ENCODE measurements at regions of chr20 and their contacts with region 1.

Region 1: DNA sequence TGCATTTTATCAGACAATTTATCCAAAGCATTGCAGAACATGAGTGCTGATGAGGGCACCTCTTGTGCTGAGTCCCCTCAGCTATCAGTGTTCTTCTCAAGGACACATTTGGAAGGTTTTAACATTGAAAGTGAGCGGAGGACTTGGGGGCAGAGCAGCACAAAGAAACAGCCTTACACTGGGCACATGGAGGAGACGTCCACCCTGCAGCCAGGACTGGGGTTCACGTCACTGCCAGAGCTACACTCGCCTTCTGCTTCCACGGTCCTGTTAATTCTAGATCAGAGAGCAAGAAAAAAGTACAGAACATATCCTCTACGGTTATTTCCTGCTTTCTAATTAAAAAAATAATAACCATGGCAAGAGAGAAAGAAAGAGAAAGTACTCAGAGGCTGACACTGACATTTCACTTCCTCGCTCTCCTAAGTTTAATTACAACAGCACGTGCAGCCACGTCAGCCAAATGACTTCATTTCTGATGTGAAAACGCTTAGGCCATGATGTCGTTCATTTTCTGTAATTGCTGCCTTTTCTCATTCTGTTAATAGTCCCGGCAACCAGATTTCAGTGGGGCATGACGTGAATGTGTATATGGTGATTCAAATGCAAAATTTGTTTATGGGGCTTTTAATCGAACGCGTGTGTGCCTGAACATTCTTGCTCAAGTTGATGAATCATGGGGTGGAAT is 5.1 kb downstream of the PRND start:
- DNase-seq: peak; percentile 89
- H3K4me3 Mint-ChIP-seq: peak overlapping the region; percentile 40
- H3K27ac Mint-ChIP-seq: peak overlapping the region; percentile 46
- H3K4me1 Mint-ChIP-seq: peaks cover 13% of the 10 kb centered on the region
- H3K27me3 Mint-ChIP-seq: no peaks in the 10 kb centered on the region

Region 2: DNA sequence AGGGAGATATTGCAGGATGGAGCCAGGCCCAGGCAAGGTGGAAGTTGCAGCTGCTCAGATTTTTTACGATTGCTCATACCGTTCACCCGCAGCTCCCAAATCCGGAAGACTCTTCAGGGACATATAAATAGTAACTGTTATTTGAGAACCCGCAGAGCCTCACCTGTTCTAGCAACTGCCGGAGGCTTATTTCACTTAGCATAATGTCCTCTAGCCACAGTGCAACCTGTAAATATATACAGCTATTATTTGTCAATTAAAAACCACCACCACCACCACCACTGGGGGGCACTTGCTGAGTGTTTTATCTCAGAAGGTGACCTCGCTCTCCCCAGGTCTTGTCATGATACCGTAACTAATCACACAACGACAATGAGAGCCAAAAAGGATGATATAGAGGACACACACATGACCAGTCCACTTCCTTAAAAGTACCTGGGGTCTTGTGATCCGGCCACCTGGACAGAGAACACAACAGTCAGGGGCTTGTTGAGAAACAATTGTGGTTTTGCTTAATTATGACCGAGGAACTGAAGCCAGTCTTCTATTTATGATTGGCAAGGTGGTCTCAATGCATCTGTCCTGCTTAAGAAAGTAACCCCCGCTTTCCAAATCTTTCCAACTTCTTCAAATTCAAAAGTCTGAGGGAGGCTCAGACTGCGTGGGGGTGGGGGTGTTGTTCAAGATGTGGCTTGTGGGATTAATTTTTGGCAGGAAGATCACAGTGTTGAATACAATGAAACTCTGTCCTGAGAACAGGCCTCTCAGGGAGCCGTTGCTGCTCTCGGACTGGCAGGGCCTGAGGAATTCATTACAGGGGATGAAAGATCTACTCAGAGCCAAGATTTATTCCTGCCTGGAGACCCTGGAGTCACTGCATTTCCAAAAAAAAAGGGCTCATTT is 112.9 kb before region 1 on chr20:
- CTCF ChIA-PET with region 1: interaction called, 90 read pairs
- intact Hi-C with region 1: no loop called
- DNase-seq: peak; percentile 84
- H3K4me3 Mint-ChIP-seq: no peak overlapping the region
- H3K27ac Mint-ChIP-seq: no peak overlapping the region
- H3K4me1 Mint-ChIP-seq: peaks cover 2% of the 10 kb centered on the region
- H3K27me3 Mint-ChIP-seq: no peaks in the 10 kb centered on the region

Region 3: GRCh38 chr20:4740774-4741431 is 14.0 kb after region 1 on chr20:
- CTCF ChIA-PET with region 1: interaction called, 15 read pairs
- intact Hi-C with region 1: no loop called
- DNase-seq: peak; percentile 79
- H3K4me3 Mint-ChIP-seq: no peak overlapping the region
- H3K27ac Mint-ChIP-seq: no peak overlapping the region
- H3K4me1 Mint-ChIP-seq: no peaks in the 10 kb centered on the region
- H3K27me3 Mint-ChIP-seq: peaks cover 3% of the 10 kb centered on the region

Region 4: GRCh38 chr20:4813863-4814695 is 87.2 kb after region 1 on chr20:
- CTCF ChIA-PET with region 1: no interaction called
- intact Hi-C with region 1: loop called (anchors 1 kb)
- DNase-seq: peak; percentile 72
- H3K4me3 Mint-ChIP-seq: peak overlapping the region; percentile 93
- H3K27ac Mint-ChIP-seq: peak overlapping the region; percentile 98
- H3K4me1 Mint-ChIP-seq: peaks cover 72% of the 10 kb centered on the region
- H3K27me3 Mint-ChIP-seq: no peaks in the 10 kb centered on the region

Region 5: DNA sequence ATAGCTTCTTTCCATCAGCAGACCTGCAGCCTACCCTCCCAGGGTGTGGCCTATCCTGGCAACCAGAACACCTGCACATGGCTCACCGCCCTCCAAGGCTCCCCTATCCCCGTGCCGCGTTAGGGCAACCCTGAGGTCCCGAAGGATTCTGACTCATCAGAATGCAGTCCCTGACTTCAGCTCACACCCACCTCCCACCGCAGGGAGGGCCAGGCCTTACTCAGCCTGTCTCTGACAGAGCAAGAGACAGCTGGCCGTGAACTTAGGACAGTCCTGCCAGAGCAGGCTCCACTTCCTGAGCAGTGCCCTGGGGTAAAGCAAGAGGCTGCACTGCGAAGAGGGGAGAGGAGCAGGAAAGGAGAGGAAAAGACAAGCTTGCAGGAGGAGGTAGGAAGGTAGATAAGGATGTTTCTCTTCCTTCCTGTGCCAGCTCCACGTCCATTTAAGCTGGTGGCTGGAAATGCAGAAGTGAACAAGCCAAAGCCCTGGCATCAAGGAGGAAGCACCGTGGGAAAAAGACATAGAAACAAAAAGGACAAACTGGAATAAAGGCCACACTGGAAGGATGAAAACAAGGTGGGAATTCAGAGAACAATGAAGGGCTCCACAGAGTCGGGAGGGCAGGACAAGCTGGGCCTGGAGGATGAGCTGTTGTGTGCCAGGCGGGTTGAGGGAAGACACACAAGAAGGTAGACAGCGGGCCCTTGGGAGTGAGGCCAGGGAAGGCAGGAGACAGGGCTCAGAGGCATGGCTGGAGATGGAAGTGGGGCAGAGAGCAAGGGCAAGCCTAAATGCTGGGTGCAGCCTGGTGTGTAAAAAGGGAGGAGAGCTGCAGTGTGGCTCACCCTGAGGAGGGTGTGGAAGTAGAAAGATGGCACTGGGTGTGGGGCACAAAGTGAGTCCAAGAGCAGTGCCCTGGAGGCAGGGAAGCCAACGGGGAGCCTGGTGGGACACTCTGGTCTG is 171.7 kb after region 1 on chr20:
- CTCF ChIA-PET with region 1: no interaction called
- intact Hi-C with region 1: no loop called
- DNase-seq: no peak
- H3K4me3 Mint-ChIP-seq: no peak overlapping the region
- H3K27ac Mint-ChIP-seq: no peak overlapping the region
- H3K4me1 Mint-ChIP-seq: peaks cover 2% of the 10 kb centered on the region
- H3K27me3 Mint-ChIP-seq: no peaks in the 10 kb centered on the region

Region 6: DNA sequence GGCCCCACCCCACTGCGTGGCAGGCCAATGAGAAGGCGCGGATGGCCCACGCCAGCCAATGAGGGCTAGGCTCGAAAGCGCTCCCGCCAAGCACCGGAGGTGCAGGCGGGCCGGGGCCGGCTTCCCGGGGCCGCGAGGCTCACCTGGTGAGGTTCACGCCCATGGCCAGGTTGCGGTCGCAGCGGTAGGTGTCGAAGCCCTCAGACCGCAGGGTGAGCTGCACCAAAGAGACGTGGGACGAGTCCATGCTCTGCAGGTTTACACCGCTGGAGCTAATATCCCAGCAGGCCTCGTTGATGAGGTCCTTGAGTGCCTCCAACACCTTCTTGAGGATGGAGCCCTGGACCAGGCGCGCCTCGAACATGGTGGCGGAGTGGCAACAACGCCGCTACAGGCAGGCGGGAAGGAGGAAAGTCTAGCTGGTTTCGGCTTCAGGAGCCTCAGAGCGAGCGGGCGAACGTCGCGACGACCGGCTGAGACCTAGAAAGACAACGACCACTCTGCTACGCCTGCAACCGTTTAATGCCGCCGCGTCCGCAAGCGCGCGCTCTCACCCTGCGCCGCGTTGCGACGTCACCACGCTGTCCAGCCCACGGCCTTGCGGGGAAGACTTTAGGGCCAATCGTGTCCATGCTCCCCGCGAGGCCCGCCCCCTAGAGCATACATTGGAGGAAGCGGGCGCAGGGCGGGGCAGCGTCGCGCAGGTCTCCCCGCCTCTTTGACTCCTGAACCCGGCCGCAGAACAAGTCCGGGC is 392.8 kb after region 1 on chr20 and contains the start of gene PCNA:
- CTCF ChIA-PET with region 1: no interaction called
- intact Hi-C with region 1: loop called (anchors 1 kb)
- DNase-seq: peak; percentile 99
- H3K4me3 Mint-ChIP-seq: peak within 1 kb of the TSS; percentile 93
- H3K27ac Mint-ChIP-seq: peak within 1 kb of the TSS; percentile 99
- H3K4me1 Mint-ChIP-seq: peaks cover 44% of the 10 kb centered on the region
- H3K27me3 Mint-ChIP-seq: no peaks in the 10 kb centered on the region
- total RNA-seq, gene PCNA: 631 to 641 TPM